Heart right ventricle (tissue), 16 donors: ENCODE measurements at regions of chr10 and their contacts with region 1.

Region 1: DNA sequence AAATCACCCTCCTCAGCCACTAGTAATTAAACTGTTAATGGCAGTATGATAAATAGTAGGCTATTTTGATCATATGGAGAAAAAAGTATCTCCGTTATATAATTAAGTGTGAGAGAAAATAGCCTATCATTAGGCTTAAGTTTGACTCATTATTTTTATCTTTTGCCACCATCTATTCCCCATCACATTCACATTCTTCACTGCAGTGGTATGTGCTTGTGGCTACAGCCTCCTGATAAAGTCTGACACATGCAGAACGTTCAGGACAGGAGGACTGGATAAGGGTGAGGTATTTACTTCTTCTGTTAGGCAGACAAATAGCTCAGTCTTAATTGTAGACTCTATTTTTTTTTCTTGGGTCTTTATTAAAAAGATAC is 5.8 kb downstream of the NEBL start:
- DNase-seq: no peak
- ATAC-seq: peak in 4 of 8 donors; percentile 47 to 68 (median 56)
- H3K4me3 ChIP-seq: peak overlapping the region in 9 of 10 donors; percentile 2 to 59 (median 35)
- H3K27ac ChIP-seq: peak overlapping the region in 9 of 10 donors; percentile 23 to 95 (median 89)
- H3K4me1 ChIP-seq: peaks cover 0 to 27% (median 5%) of the 10 kb centered on the region in 9 donors
- H3K27me3 ChIP-seq: no peaks in the 10 kb centered on the region
- CTCF ChIP-seq: no peak

Region 2: DNA sequence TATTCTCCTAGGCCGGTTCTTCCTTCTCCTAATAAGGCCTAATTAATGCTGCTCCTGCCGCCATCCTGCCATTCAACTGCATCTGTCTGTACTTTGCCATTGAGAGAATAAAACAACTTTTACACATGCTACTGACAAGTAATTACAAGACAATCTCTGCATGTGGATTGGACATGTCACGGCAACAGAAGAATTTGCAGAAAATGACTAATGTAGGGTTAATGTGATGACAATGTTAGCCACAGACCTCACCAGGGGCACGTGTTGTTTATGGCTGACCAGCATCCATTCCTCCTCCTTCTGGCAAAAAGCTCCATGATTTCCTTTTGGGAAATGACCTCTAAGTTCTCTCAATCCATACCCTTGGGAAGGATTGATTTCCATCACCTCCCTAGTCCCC is 52.2 kb before region 1 on chr10:
- intact Hi-C with region 1: no loop called
- DNase-seq: no peak
- ATAC-seq: no peak
- H3K4me3 ChIP-seq: no peak overlapping the region
- H3K27ac ChIP-seq: no peak overlapping the region
- H3K4me1 ChIP-seq: peaks cover 0 to 30% (median 9%) of the 10 kb centered on the region in 9 donors
- H3K27me3 ChIP-seq: no peaks in the 10 kb centered on the region
- CTCF ChIP-seq: no peak

Region 3: GRCh38 chr10:21015851-21016250 is 124.5 kb after region 1 on chr10:
- intact Hi-C with region 1: loop called in 1 of 10 experiments (anchors 10 kb)
- DNase-seq: no peak
- ATAC-seq: no peak
- H3K4me3 ChIP-seq: no peak overlapping the region
- H3K27ac ChIP-seq: no peak overlapping the region
- H3K4me1 ChIP-seq: peaks cover 0 to 6% (median 0%) of the 10 kb centered on the region in 9 donors
- H3K27me3 ChIP-seq: no peaks in the 10 kb centered on the region
- CTCF ChIP-seq: no peak

Region 4: GRCh38 chr10:21069929-21070700 is 178.8 kb after region 1 on chr10:
- intact Hi-C with region 1: loop called in 3 of 10 experiments (anchors 5 to 10 kb)
- DNase-seq: no peak
- ATAC-seq: peak in 6 of 8 donors; percentile 53 to 79 (median 66)
- H3K4me3 ChIP-seq: no peak overlapping the region
- H3K27ac ChIP-seq: peak overlapping the region in 8 of 10 donors; percentile 25 to 66 (median 44)
- H3K4me1 ChIP-seq: peaks cover 0 to 41% (median 12%) of the 10 kb centered on the region in 9 donors
- H3K27me3 ChIP-seq: no peaks in the 10 kb centered on the region
- CTCF ChIP-seq: no peak